HEK293 (cell line): ENCODE measurements at regions of chr10 and their contacts with region 1.

Region 1: DNA sequence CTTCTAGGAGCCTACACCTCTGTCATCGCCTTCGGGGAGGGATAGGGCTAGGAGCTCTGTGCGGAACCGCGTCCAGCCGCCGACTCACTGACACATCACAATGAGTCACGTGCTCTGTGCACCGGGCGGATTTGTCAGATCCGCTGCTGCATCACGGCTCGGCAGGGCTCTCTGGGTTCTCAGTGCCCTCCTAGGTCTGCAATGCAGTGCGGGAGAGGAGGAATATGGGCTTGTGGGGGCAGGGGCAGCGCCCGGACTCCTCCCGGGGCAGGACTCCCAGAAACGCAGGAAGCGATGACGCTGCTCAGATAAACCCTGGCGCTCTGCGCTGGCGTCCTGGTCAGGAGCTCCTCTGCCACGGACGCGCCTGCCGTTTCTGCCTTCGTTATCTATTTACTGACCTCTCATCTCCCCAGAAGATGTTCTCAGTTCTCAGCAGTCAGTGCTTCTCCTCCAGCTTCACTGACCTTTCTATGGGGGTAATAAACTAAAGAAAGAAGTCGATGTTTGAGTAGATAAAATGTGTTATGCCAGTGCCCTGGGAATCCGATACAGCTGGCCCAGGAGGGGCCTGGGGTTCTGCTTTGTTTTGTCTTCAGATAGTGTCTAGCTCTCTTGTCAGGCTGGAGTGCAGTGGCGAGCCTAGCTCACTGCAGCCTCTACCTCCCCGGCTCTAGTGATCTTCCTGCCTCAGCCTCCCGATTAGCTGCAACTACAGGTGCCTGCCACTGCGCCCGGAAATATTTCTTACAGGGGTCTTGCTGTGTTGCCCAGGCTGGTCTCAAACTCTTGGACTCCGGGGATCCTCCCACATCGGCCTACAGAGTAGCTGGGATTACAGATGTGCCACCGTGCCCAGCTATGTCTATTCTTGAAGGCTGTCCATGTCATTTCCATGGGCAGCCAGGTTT is 22.8 kb upstream of the ITGB1 start:
- H3K4me3 ChIP-seq: peak overlapping the region; percentile 50
- H3K27ac ChIP-seq: peak overlapping the region; percentile 50
- H3K4me1 ChIP-seq: no peaks in the 10 kb centered on the region
- CTCF ChIP-seq: no peak; the same call in 1 of the 2 replicates

Region 2: GRCh38 chr10:32731527-32731926 is 249.3 kb before region 1 on chr10:
- CTCF ChIA-PET with region 1: no interaction called
- POLR2A ChIA-PET with region 1: no interaction called
- H3K4me3 ChIP-seq: no peak overlapping the region
- H3K27ac ChIP-seq: no peak overlapping the region
- H3K4me1 ChIP-seq: no peaks in the 10 kb centered on the region
- CTCF ChIP-seq: no peak

Region 3: DNA sequence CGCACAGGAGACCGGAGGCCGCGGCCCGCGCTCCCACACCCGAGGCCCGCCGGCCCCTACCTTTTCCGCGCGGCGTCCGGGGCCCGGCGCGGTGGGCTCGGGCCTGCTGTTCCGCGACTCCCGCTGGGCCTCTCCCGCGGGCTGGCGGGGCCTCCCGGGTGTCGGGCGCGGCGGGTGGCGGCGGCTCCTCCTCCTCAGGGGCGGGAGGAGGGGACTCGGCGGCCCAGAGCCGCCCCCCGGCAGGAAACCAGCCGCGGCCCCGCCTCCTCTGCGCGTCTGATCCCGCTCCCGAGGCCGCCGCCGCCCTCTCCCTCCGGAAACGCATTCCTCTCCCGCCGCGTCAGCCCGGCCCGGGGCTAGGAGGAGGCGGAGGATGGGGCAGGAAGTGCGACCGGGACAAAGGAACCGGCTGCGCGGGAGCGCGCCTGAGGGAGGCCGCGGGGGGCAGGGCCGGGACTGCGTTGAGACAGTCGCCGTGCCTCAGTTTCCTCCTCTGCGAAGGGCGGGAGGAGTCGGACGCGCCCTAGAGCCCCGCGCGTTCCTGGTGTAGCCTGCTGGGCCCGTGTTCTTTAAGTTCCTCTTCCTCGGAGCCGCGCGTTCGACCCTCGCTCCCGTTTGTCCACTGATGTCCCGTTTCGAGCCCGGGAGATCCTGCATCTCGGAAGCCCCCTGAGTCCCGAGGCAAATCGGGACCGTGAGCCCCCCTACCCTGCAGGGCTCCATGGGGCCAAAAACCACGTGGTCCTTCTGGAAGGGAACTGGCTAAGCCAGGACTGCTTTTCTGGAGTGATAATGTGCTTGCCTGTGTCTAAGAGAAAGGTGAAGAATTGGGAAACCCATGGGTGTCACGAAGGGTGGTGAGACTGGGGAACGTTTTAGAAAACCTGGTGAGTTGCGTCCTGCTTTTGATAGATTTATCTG is 22.5 kb before region 1 on chr10 and contains the start of gene ITGB1:
- CTCF ChIA-PET with region 1: no interaction called
- POLR2A ChIA-PET with region 1: interaction called, 44 read pairs
- H3K4me3 ChIP-seq: peak within 1 kb of the TSS; percentile 92
- H3K27ac ChIP-seq: peak within 1 kb of the TSS; percentile 86
- H3K4me1 ChIP-seq: peaks cover 13% of the 10 kb centered on the region
- CTCF ChIP-seq: no peak; the same call in 1 of the 2 replicates